K562 (cell line): ENCODE measurements at regions of chr14 and their contacts with region 1.

Region 1: DNA sequence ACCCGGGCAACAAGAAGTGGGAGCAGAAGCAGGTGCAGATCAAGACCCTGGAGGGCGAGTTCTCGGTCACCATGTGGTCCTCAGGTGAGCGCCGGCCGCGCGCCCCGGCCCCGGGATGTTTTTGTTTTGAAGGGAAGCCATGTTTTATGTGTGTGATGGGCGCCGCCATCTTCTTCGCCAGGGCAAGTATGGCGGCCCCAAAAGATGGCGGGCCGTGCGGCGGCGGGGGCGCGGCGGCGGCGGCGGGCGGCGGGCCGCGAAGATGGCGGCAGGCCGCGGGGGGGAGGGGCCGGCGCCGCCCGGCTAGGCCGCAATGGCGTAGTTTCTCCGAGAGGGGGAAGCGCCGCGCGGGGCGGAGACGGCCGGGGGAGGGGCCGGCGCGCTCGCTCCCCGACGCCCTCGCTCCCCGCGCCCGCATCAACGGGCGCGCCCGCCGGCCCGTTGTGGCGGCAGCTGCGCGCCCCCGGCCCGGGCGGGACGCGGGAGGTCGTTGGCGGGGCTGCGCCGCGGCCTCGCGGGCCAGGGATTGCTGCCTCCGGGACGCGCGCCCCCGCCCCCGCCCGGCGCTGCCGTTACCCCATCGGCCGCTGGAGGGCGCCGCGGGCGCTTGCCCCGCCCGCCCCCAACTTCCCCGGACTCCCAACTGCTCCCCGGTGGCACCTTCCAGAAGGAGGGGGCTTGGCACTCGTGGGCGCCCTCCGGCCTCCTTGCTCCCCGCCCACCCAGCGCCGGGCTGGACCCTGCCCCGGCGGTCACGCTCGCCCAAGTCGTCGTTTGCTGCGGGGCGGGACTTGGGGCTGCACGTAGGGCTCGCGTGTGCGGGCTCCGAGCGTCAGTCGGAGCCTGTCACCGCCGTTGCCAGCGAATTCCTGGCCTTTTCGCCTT is 1.1 kb downstream of the YY1 start:
- DNase-seq: peak; percentile 63 to 85 (median 74)
- ATAC-seq: peak; percentile 53
- H3K4me3 ChIP-seq: peak overlapping the region; percentile 96
- H3K27ac ChIP-seq: peak overlapping the region; percentile 98
- H3K4me1 ChIP-seq: peaks cover 13 to 16% of the 10 kb centered on the region in 2 experiments; a peak in 4 of 5 replicates
- H3K27me3 ChIP-seq: no peaks in the 10 kb centered on the region
- CTCF ChIP-seq: peak in 2 of 3 experiments; percentile 37 to 67; a peak in 4 of 6 replicates
- EP300 ChIP-seq: no peak
- POLR2A ChIP-seq: no peak
- RAD21 ChIP-seq: no peak

Region 2: DNA sequence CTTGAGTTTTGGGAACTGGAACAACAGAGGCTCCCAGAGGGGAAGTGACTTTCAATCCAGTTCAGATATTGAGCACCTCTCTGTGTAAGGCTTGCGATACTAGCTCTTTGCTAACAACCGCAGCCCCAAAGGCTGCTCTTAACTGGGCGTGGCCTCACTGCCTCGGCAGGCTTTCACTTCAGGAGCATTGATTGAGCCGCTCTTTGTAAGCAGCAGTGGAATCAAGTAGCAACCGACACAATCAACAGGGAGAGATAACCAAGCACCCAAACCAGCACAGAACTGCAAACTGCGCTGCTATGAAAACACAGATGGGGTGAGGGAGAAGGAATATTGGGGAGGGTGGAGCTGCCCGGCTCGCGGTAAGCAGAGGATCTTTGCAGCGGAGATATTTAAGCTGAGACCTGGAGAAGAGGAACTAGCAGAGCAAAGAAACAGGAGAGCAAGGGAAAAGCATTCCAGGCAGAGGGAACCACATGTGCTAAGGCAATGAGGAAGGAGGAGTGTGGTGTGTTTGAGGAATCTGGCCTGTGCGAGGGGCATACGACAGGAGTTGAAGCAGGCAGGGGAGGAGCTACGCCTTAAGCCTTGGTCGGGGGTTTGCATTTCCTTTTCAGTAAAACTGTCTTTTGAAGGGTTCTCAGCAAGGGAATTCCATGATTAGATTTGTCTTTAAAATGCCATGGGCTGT is 18.4 kb before region 1 on chr14:
- CTCF ChIA-PET with region 1: no interaction called
- POLR2A ChIA-PET with region 1: interaction called, 46 read pairs
- in situ Hi-C with region 1: no loop called
- intact Hi-C with region 1: loop called (anchors 2 kb)
- DNase-seq: peak; percentile 13 to 86 (median 34)
- ATAC-seq: peak; percentile 89
- H3K4me3 ChIP-seq: peak overlapping the region; percentile 46
- H3K27ac ChIP-seq: peak overlapping the region; percentile 56
- H3K4me1 ChIP-seq: peaks cover 35 to 38% of the 10 kb centered on the region in 2 experiments
- H3K27me3 ChIP-seq: no peaks in the 10 kb centered on the region
- CTCF ChIP-seq: no peak
- EP300 ChIP-seq: no peak
- POLR2A ChIP-seq: 0 out of 2 replicates have a peak, but pooled peaks have one; percentile 36
- RAD21 ChIP-seq: no peak

Region 3: DNA sequence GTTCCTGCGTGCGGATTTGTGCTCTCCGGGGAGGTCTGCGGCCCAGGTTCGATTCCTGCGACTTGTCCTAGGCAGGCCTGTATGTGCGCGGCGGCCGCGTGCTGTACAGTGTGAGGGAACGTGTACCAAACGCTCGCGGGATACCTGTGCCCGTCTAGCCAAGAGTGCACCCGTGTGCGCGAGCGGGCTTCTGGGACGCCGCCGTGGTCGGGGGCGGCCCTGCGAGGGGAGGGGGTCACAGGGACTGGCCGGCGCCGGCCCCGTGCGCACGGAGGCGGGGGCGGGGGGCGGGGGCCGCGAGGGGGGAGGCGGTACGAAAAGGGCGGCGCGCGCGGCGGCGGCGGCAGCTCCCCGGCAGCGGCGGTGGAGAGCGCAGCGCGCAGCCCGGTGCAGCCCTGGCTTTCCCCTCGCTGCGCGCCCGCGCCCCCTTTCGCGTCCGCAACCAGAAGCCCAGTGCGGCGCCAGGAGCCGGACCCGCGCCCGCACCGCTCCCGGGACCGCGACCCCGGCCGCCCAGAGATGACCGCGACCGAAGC is 486.5 kb after region 1 on chr14 and contains the start of gene DLK1:
- CTCF ChIA-PET with region 1: no interaction called
- POLR2A ChIA-PET with region 1: no interaction called
- in situ Hi-C with region 1: no loop called
- intact Hi-C with region 1: no loop called
- DNase-seq: peak in 2 of 4 experiments; percentile 72 to 74
- ATAC-seq: no peak; the same call in 2 of the 3 replicates
- H3K4me3 ChIP-seq: peak within 1 kb of the TSS; percentile 38
- H3K27ac ChIP-seq: no peak within 1 kb of the TSS
- H3K4me1 ChIP-seq: peaks cover 5 to 24% of the 10 kb centered on the region in 2 experiments; a peak in 3 of 5 replicates
- H3K27me3 ChIP-seq: peaks cover 0 to 15% of the 10 kb centered on the region in 2 experiments; a peak in 3 of 5 replicates
- CTCF ChIP-seq: no peak
- EP300 ChIP-seq: no peak
- POLR2A ChIP-seq: no peak
- RAD21 ChIP-seq: no peak
- polyA plus RNA-seq, gene DLK1: 4.4 to 4.7 TPM